A673 (cell line): ENCODE measurements at regions of chr15 and their contacts with region 1.

Region 1: DNA sequence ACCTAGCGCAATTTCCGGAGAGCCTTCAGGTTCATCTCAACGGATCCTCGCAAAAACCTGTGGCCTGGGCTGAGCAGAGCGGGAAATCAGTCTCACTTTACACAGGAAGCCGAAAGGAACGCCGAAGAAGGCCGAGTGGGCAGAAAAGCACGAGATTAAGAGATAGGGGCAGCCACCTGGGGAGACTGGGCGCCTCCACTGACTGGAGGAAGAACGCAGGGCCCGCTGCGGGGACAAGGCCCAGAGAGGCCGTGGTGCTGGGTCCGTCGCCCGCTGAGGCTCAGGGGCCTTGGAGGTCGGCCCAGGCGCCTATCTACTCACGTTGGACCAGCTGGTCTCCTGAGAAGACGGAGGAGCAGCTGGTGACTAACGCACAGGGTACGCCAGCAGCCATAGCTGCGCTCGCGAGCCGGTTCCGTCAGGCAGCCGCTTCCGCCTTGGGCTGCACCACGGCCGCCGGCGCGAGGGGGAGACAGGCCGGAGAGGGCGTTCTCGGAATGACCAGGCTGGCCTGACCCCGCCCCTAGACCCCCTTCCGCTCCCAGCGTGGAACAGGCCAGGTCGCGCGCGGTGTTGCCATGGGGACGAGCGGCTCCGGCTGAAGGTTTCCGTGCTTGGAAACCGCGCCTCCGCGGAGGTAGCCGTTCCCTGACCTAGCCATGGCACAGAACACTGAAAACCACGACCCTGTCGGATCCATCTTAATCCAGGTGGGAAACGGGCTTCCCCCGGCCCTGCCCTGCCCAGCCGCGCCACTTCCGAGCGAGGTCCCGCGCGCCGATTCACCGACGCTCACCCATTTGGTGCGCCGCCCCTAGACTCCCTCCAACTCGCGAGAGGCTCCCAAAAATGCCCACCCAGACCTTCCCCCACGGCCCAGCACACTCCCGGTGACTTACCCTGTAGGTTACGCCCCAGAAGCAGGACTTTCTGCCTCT is at the starts of genes AAGAB and IQCH:
- DNase-seq: peak; percentile 97
- H3K4me3 ChIP-seq: peak within 1 kb of the TSS; percentile 76
- H3K27ac ChIP-seq: peak within 1 kb of the TSS; percentile 75
- H3K4me1 ChIP-seq: no peaks in the 10 kb centered on the region
- H3K27me3 ChIP-seq: no peaks in the 10 kb centered on the region
- CTCF ChIP-seq: no peak
- total RNA-seq, gene AAGAB: 54.8 and 55.1 TPM in 2 replicates
- total RNA-seq, gene IQCH: 1.7 and 2.5 TPM in 2 replicates

Region 2: DNA sequence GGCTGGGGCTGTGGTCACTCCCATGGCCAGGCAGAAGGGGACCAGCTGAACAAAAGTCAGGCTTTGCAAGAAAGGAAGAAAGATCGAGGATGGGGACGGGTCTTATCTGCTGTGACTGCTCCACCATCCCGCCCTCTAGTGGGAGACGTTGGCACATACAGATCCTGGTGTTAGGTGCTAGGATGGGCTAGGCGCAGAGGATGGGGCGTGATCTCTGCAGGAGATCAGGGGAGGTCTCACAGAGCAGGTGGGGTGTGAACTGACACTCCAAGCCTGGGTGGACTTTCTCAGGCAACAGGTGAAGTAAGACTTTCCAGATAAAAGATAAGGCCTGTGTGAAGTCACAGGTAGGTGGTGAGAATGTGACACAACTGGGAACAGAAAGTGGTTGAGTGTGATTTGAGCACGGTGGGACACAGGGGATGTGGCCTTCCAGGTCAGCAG is 331.0 kb before region 1 on chr15:
- CTCF ChIA-PET with region 1: no interaction called
- POLR2A ChIA-PET with region 1: no interaction called
- intact Hi-C with region 1: no loop called
- DNase-seq: peak; percentile 39
- H3K4me3 ChIP-seq: no peak overlapping the region
- H3K27ac ChIP-seq: no peak overlapping the region
- H3K4me1 ChIP-seq: no peaks in the 10 kb centered on the region
- H3K27me3 ChIP-seq: no peaks in the 10 kb centered on the region
- CTCF ChIP-seq: peak; percentile 63

Region 3: GRCh38 chr15:67240235-67241131 is 14.0 kb before region 1 on chr15:
- CTCF ChIA-PET with region 1: no interaction called
- POLR2A ChIA-PET with region 1: interaction called, 10 read pairs
- intact Hi-C with region 1: no loop called
- DNase-seq: no peak
- H3K4me3 ChIP-seq: no peak overlapping the region
- H3K27ac ChIP-seq: no peak overlapping the region
- H3K4me1 ChIP-seq: peaks cover 64% of the 10 kb centered on the region
- H3K27me3 ChIP-seq: no peaks in the 10 kb centered on the region
- CTCF ChIP-seq: peak; percentile 53